ENCODE measurements at regions of chr1 and their contacts with region 1.

Region 1: GRCh38 chr1:192844360-192844759 is 35.5 kb downstream of the RGS2 start:
- DNase-seq: no peak
- H3K4me3 ChIP-seq: no peak overlapping the region
- H3K27ac ChIP-seq: no peak overlapping the region
- H3K4me1 ChIP-seq: peaks cover 17% of the 10 kb centered on the region
- H3K27me3 ChIP-seq: no peaks in the 10 kb centered on the region
- CTCF ChIP-seq: no peak

Region 2: DNA sequence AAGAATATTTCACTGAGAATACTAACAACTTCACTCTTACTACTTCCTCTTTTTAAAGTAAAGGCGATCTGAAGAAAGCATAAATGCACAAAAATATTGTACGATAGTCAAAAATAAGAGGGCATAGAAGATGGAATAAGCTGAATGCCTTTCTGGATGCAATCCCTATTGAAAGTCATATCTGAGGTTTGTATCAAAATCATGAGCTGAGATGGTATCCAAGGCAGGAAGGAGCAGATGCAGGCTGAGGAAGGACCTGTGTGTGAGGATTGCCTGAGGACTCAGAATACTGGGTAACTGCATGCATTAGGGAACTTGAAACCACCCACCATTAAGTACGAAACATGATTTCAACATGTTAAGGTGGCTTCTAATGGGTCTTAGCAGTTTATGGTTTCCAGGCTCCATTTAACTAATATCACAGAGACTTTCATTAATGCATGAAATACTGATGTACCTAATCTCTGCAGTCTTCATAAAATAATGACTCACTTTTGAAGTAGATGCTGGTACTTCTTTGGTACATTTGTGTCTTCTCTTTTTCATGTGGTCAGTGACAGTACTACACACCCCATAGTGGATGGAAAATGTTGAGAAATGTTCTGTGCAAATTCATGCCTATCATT is 298.4 kb before region 1 on chr1:
- CTCF ChIA-PET with region 1: no interaction called
- POLR2A ChIA-PET with region 1: interaction called, 15 read pairs
- intact Hi-C with region 1: no loop called
- DNase-seq: peak; percentile 50
- H3K4me3 ChIP-seq: no peak overlapping the region
- H3K27ac ChIP-seq: peak overlapping the region; percentile 92
- H3K4me1 ChIP-seq: peaks cover 80% of the 10 kb centered on the region
- H3K27me3 ChIP-seq: no peaks in the 10 kb centered on the region
- CTCF ChIP-seq: 0 out of 2 replicates have a peak, but pooled peaks have one; percentile 29

Measured in A673 (cell line).